PC-3 (cell line): ENCODE measurements at regions of chr6 and their contacts with region 1.

Region 1: DNA sequence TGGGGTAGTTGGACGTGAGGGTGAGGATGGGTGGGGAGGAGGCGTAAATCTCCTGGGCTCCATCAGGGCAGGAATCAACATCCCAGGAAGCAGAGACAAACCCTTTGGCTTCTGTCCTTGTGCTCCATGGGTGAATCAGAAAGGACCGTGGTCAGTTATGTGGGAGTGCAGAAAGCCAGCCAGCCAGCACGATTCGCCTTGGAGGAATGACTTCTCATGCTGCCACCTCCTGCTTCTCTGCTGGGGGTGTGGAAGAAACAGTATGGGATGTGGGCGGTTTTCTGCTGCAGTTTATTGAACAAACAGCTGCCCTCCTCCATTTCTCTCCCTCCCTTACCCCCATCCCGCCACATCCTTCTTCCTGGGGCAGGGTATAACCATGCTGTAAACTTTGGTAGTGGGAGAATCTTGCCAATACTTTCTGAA is 214.5 kb downstream of the SOX4 start:
- DNase-seq: peak; percentile 65
- ATAC-seq: peak; percentile 95
- H3K4me3 ChIP-seq: no peak overlapping the region
- H3K27ac ChIP-seq: no peak overlapping the region
- H3K4me1 ChIP-seq: peaks cover 20% of the 10 kb centered on the region
- H3K27me3 ChIP-seq: no peaks in the 10 kb centered on the region
- CTCF ChIP-seq: no peak

Region 2: GRCh38 chr6:23394681-23395080 is 1586.6 kb after region 1 on chr6:
- CTCF ChIA-PET with region 1: no interaction called
- POLR2A ChIA-PET with region 1: interaction called, 10 read pairs
- intact Hi-C with region 1: no loop called
- DNase-seq: no peak
- ATAC-seq: no peak
- H3K4me3 ChIP-seq: no peak overlapping the region
- H3K27ac ChIP-seq: no peak overlapping the region
- H3K4me1 ChIP-seq: no peaks in the 10 kb centered on the region
- H3K27me3 ChIP-seq: no peaks in the 10 kb centered on the region
- CTCF ChIP-seq: no peak